ENCODE measurements at regions of chr22 and their contacts with region 1.

Region 1: GRCh38 chr22:19291580-19292457 is at the start of gene CLTCL1:
- DNase-seq: peak; percentile 56 to 96 (median 72)

Region 2: GRCh38 chr22:19232623-19233022 is 59.2 kb before region 1 on chr22:
- intact Hi-C with region 1: loop called (anchors 10 kb)
- DNase-seq: no peak

Measured in posterior cingulate gyrus (tissue), 11 donors.